WTC11 (cell line): ENCODE measurements at regions of chr1 and their contacts with region 1.

Region 1: DNA sequence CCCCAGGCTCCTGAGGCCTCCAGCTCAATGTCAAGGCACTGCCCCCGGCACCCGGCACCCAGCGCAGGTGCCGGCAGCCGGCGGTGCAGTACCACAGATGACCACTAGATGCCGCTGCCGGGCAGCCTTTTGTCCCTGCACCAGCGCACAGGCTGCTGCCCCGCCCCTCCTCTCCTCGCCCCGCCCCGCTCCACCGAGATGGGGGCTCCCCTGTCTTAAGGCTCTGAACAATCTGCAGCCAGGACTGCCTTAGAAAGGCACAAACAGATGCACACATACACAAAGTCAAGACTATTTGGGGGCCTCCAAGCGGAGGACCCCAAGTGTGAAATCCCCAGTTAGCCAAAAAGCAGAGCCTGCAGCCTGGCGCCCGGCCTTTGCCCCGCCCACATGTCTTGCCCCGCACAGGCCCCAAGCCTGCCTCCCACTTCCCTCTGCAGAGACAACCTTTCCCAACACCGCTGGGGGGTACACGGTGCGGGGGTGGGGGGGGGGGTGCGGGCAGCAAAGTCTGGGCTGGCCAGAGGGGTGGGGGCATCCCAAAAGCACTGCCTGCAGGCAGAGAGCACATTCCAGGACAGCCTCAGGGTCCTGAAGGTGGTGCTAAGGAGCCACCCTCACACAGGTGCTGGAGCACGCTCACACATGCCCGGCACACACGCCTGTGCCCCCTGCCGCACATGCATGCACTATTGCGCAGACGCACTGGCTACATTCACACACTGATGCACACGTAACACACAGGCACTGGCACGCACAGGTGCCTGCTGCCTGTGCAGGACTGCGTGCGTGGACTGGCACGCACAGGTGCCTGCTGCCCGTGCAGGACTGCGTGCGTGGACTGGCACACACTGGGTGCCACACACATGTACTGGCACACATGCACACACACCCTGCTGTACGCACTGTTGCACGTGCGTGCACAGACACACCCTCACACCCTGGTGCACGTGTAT is 37.1 kb downstream of the ARHGEF16 start:
- DNase-seq: peak; percentile 87
- ATAC-seq: peak; percentile 85
- H3K4me3 Mint-ChIP-seq: peak overlapping the region; percentile 67
- H3K27ac Mint-ChIP-seq: no peak overlapping the region
- H3K4me1 Mint-ChIP-seq: peaks cover 2% of the 10 kb centered on the region; the same call in 1 of the 2 replicates
- H3K27me3 Mint-ChIP-seq: no peaks in the 10 kb centered on the region; the same call in none of the 2 replicates
- CTCF ChIP-seq: peak; percentile 100

Region 2: DNA sequence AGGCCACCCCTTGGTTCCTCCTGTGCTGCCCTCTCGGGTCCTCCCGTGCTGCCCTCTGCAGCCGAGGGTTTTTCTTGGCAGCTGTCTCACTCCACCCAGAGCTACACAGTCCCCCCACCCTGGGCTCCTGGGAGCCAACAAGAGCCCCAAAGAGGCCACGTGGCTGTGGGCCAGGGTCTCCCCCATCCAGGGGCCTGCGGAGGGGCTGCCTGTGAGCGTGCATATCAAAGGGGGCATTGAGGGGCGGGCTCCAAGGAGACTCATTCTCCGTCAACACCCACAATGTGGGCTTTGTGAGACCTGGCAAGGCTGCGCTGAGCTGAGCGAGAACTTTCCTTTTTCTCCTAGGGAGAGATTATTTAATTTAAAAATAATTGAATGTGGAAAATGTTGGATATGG is 145.8 kb before region 1 on chr1:
- CTCF ChIA-PET with region 1: no interaction called
- POLR2A ChIA-PET with region 1: no interaction called
- DNase-seq: no peak
- ATAC-seq: no peak
- H3K4me3 Mint-ChIP-seq: no peak overlapping the region
- H3K27ac Mint-ChIP-seq: no peak overlapping the region
- H3K4me1 Mint-ChIP-seq: no peaks in the 10 kb centered on the region
- H3K27me3 Mint-ChIP-seq: peaks cover 3% of the 10 kb centered on the region; the same call in 1 of the 2 replicates
- CTCF ChIP-seq: no peak

Region 3: GRCh38 chr1:3391711-3392110 is 99.9 kb before region 1 on chr1:
- CTCF ChIA-PET with region 1: no interaction called
- POLR2A ChIA-PET with region 1: no interaction called
- DNase-seq: peak; percentile 56
- ATAC-seq: peak; percentile 55
- H3K4me3 Mint-ChIP-seq: peak overlapping the region; percentile 39
- H3K27ac Mint-ChIP-seq: no peak overlapping the region
- H3K4me1 Mint-ChIP-seq: peaks cover 24% of the 10 kb centered on the region
- H3K27me3 Mint-ChIP-seq: peaks cover 56% of the 10 kb centered on the region
- CTCF ChIP-seq: no peak

Region 4: DNA sequence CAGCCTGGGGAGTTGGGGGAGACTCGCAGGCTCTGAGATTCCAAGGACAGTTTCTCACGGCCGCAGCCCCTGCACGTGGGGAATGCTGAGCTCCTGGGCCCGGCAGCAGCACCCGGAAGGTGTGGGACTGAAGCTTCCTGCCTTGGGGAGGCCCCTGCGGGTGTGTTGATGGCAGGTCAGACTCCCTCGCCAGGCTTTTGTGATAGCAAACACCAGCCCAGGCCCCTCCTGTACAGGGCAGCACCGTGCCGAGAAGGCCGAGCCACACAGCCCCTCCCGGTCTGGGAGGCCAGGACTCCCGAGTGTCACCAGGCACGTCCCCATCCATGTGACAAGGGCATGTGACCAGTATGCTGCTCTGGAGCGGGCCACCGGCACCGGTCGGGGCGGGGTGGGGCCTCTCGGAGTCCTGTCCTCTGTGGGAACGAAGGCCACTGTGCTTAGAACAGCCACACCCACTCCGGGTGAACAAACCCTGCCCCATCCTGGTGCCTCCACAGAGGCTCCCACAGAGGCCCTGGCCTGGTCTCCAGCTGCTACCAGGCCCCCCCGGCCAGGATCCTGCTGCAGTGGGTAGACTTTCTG is 68.2 kb before region 1 on chr1:
- CTCF ChIA-PET with region 1: interaction called, 14 read pairs
- POLR2A ChIA-PET with region 1: no interaction called
- DNase-seq: no peak
- ATAC-seq: no peak
- H3K4me3 Mint-ChIP-seq: no peak overlapping the region
- H3K27ac Mint-ChIP-seq: no peak overlapping the region
- H3K4me1 Mint-ChIP-seq: no peaks in the 10 kb centered on the region
- H3K27me3 Mint-ChIP-seq: 0 out of 2 replicates have a peak, but pooled peaks cover 4% of the 10 kb centered on the region
- CTCF ChIP-seq: no peak

Region 5: DNA sequence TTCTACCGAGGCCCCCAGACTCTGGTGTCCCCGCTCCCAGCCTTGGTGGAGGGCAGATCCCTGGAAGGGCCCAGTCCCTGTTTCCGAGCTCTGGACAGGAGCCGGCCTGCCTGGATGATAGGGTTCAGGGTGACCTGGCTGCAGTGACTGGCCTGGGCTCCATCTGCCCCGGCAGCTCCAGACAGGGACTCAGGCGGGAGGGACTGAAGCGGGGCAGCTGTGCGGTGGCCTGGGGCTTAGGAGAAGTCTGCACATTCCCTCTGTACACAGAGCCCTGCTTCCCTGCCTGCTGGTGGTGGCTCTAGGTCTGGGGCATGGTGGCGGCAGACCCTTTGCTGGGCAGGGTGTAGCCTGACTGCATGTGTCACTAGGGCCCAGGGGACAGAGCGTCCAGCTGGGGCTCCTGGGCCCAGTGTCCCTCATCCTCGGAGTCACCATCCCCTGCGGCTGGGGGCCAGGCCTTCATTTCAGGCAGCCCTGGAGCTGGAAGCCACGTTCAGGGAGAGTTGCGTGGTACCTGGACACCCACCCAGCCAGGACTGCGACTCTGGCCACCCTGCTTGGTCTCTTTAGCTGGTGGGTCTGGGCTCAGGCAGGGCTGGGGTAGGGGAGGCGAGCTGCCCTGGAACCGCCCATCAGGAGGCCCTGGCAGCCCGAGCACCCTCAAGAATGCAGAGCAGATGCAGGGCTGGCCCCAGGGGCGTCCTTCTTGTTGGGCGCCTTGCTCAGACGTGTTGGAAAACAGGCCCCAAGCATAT is 27.5 kb before region 1 on chr1:
- CTCF ChIA-PET with region 1: interaction called, 20 read pairs
- POLR2A ChIA-PET with region 1: no interaction called
- DNase-seq: peak; percentile 5
- ATAC-seq: no peak
- H3K4me3 Mint-ChIP-seq: no peak overlapping the region
- H3K27ac Mint-ChIP-seq: no peak overlapping the region
- H3K4me1 Mint-ChIP-seq: peaks cover 3% of the 10 kb centered on the region; the same call in 1 of the 2 replicates
- H3K27me3 Mint-ChIP-seq: no peaks in the 10 kb centered on the region
- CTCF ChIP-seq: no peak

Region 6: GRCh38 chr1:3510136-3510955 is 18.8 kb after region 1 on chr1:
- CTCF ChIA-PET with region 1: interaction called, 34 read pairs
- POLR2A ChIA-PET with region 1: no interaction called
- DNase-seq: no peak
- ATAC-seq: no peak
- H3K4me3 Mint-ChIP-seq: no peak overlapping the region
- H3K27ac Mint-ChIP-seq: no peak overlapping the region
- H3K4me1 Mint-ChIP-seq: no peaks in the 10 kb centered on the region
- H3K27me3 Mint-ChIP-seq: no peaks in the 10 kb centered on the region
- CTCF ChIP-seq: no peak

Region 7: GRCh38 chr1:3553166-3553939 is 61.8 kb after region 1 on chr1:
- CTCF ChIA-PET with region 1: interaction called, 11 read pairs
- POLR2A ChIA-PET with region 1: no interaction called
- DNase-seq: no peak
- ATAC-seq: no peak
- H3K4me3 Mint-ChIP-seq: no peak overlapping the region
- H3K27ac Mint-ChIP-seq: no peak overlapping the region
- H3K4me1 Mint-ChIP-seq: no peaks in the 10 kb centered on the region
- H3K27me3 Mint-ChIP-seq: no peaks in the 10 kb centered on the region; the same call in 1 of the 2 replicates
- CTCF ChIP-seq: no peak

Region 8: DNA sequence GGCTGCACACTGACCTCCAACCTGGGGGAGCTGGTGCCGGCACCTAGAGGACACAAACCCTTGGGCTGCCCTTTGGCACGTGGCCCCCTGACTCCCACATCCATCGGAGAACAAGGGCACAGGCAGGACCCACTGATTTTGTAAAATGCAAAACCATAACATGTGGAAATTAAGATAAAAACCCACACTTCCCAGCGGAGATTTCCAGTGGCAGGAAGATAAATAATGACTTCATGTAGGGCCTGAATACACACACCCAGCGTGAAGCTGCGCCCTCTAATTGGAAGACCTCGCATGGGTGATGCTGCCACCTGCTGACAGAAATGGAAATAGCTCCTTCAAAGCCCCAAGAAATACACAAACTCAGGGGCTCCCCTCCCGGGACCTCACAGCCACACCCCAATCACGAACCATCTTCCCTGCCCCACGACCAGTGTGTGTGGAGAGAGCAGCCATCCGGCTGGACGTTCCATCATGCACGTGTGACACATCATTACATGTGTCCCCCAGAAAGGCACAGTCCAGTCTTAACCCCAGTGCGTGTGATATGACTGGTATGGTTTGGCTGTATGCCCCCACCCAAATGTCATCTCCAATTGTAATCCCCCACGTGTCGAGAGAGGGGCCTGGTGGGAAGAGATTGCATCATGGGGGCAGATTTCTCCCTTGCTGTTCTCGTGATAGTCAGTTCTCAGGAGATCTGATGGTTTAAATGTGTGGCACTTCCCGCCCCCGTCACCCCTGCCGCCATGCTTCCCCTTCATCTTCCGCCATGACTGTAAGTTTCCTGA is 127.5 kb after region 1 on chr1:
- CTCF ChIA-PET with region 1: interaction called, 59 read pairs
- POLR2A ChIA-PET with region 1: interaction called, 4 read pairs
- DNase-seq: peak; percentile 78
- ATAC-seq: peak; percentile 81
- H3K4me3 Mint-ChIP-seq: no peak overlapping the region
- H3K27ac Mint-ChIP-seq: no peak overlapping the region
- H3K4me1 Mint-ChIP-seq: peaks cover 24% of the 10 kb centered on the region
- H3K27me3 Mint-ChIP-seq: peaks cover 8% of the 10 kb centered on the region
- CTCF ChIP-seq: peak; percentile 77